Prostate gland (tissue), 2 donors: ENCODE measurements at regions of chr16 and their contacts with region 1.

Region 1: DNA sequence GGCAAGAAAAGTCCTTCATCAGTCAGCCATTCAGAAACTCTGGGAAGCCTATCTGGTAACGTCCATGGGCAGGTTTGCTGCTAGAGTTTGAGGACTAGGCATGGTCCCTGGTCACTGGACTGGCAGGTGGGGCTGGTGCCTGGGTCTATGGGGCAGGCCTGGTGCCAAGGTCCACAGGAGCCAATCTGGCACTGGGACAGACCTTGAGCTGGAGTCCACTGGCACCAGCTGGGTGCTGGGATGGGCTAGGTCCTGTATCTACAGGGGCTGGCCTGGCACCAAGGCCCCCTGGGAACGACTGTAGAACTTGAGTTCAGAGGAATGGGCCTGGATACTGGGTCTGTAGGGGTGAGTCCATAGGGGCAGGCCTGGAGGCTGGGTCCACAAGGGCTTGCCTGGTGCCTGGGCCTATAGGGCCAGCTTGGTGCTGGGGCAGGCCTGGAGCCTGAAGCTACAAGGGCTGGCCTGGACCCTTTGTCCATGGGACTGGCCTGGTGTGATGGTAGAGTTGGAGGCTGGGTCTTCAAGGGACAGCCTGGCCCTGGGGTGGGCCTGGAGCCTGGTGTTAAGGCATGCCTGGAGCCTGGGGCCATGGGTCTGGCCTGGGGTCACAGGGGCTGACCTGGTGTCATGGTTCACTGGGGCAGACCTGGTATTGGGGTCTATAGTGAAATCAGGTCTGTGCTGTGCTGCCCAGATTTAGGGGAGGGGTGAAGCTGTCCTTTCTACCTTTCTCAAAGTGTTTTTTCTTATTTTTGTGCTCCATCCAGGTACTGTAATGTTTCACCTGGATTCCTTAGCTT is 30.5 kb upstream of the NKD1 start:
- DNase-seq: no peak
- H3K4me3 ChIP-seq: no peak overlapping the region
- H3K27ac ChIP-seq: no peak overlapping the region
- H3K4me1 ChIP-seq: no peaks in the 10 kb centered on the region
- H3K27me3 ChIP-seq: no peaks in the 10 kb centered on the region
- CTCF ChIP-seq: no peak
- POLR2A ChIP-seq: no peak

Region 2: GRCh38 chr16:50335196-50335958 is 182.3 kb before region 1 on chr16:
- intact Hi-C with region 1: no loop called
- DNase-seq: no peak
- H3K4me3 ChIP-seq: no peak overlapping the region
- H3K27ac ChIP-seq: no peak overlapping the region
- H3K4me1 ChIP-seq: no peaks in the 10 kb centered on the region
- H3K27me3 ChIP-seq: no peaks in the 10 kb centered on the region
- CTCF ChIP-seq: no peak
- POLR2A ChIP-seq: no peak

Region 3: GRCh38 chr16:50386139-50386538 is 131.5 kb before region 1 on chr16:
- intact Hi-C with region 1: loop called (anchors 5 kb)
- DNase-seq: no peak
- H3K4me3 ChIP-seq: no peak overlapping the region
- H3K27ac ChIP-seq: no peak overlapping the region
- H3K4me1 ChIP-seq: no peaks in the 10 kb centered on the region
- H3K27me3 ChIP-seq: peaks cover 4% of the 10 kb centered on the region
- CTCF ChIP-seq: no peak
- POLR2A ChIP-seq: no peak

Region 4: GRCh38 chr16:50741808-50742575 is 224.3 kb after region 1 on chr16 and contains the start of gene CYLD:
- intact Hi-C with region 1: no loop called
- DNase-seq: peak; percentile 100
- H3K4me3 ChIP-seq: peak within 1 kb of the TSS; percentile 86 to 96
- H3K27ac ChIP-seq: peak within 1 kb of the TSS; percentile 86 to 88
- H3K4me1 ChIP-seq: no peaks in the 10 kb centered on the region
- H3K27me3 ChIP-seq: no peaks in the 10 kb centered on the region
- CTCF ChIP-seq: no peak
- POLR2A ChIP-seq: peak; percentile 78
- total RNA-seq, gene CYLD: 28.1 to 30.2 TPM

Region 5: DNA sequence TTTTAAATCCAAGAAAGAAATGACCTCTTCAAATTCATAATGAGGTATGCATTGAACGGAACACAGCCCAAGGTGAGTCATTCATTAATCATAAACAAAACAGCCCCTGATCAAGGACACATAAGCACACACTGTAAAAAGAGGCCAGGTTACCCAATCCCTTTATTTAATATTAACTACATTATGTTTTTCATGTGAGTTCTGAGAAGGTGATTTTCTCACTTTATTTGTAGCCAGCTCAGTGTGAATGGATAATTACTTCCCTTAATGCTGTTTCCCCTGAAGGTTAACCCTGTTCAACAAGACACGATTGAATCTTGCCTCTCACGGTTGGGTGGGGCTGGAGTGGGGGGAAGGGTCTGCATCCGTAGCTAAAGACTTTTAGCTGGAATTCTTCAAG is 890.7 kb after region 1 on chr16:
- intact Hi-C with region 1: no loop called
- DNase-seq: no peak
- H3K4me3 ChIP-seq: no peak overlapping the region
- H3K27ac ChIP-seq: no peak overlapping the region
- H3K4me1 ChIP-seq: no peaks in the 10 kb centered on the region
- H3K27me3 ChIP-seq: no peaks in the 10 kb centered on the region
- CTCF ChIP-seq: no peak
- POLR2A ChIP-seq: no peak